ENCODE measurements at regions of chr6 and their contacts with region 1.

Region 1: GRCh38 chr6:36955671-36956445 is 1.3 kb downstream of the PI16 start:
- DNase-seq: no peak
- H3K4me3 ChIP-seq: no peak overlapping the region
- H3K27me3 ChIP-seq: no peaks in the 10 kb centered on the region
- CTCF ChIP-seq: no peak

Region 2: GRCh38 chr6:36929607-36930006 is 26.3 kb before region 1 on chr6:
- CTCF ChIA-PET with region 1: no interaction called
- POLR2A ChIA-PET with region 1: interaction called, 11 read pairs
- DNase-seq: no peak
- H3K4me3 ChIP-seq: no peak overlapping the region
- H3K27me3 ChIP-seq: no peaks in the 10 kb centered on the region
- CTCF ChIP-seq: no peak

Region 3: GRCh38 chr6:36945301-36945700 is 10.6 kb before region 1 on chr6:
- CTCF ChIA-PET with region 1: no interaction called
- POLR2A ChIA-PET with region 1: no interaction called
- DNase-seq: no peak
- H3K4me3 ChIP-seq: no peak overlapping the region
- H3K27me3 ChIP-seq: peaks cover 3% of the 10 kb centered on the region
- CTCF ChIP-seq: no peak

Region 4: GRCh38 chr6:36979347-36979742 is 23.5 kb after region 1 on chr6:
- CTCF ChIA-PET with region 1: interaction called, 12 read pairs
- POLR2A ChIA-PET with region 1: no interaction called
- DNase-seq: no peak
- H3K4me3 ChIP-seq: no peak overlapping the region
- H3K27me3 ChIP-seq: no peaks in the 10 kb centered on the region
- CTCF ChIP-seq: peak; percentile 90

Region 5: DNA sequence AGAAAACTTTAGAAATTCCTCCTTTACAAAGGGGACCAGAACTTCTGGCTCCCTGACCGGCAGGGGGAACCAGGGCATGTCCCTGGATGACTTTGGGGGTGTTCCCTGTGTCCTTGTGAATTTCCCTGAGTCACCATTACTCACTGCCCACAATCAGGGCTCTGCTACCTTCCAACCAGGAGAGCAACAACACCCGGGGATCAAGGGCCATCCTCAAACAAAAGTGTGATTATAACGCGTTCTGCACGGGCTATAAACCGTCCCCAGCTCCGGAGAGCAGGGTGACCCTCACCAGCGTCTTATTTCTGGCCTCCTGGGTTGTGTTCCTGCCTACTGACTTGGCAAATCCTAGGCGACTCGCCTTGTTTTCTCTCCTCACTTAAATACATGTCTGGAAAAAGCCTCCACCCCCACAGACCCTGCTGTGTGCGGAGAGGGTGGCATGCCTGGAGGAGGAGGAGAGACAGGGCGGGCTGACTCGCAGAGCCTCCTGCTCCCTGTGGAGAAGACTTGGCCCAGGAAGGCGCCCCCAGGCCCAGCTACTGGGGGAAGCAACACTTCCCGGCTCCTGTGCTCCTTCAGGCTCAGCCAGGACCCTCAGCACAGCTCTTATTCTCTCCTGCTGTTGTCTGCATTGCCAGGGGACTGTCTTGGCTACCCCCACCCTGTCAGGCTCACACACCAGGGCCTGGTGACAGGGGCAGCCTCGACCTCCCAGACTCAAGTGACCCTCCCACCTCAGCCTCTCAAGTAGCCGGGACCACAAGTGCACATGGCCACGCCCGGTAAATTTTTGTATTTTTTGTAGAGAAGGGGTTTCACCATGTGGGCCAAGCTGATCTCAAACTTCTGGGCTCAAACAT is 103.7 kb after region 1 on chr6:
- CTCF ChIA-PET with region 1: no interaction called
- POLR2A ChIA-PET with region 1: no interaction called
- DNase-seq: peak; percentile 90
- H3K4me3 ChIP-seq: no peak overlapping the region
- H3K27me3 ChIP-seq: no peaks in the 10 kb centered on the region
- CTCF ChIP-seq: peak; percentile 84